Panc1 (cell line): ENCODE measurements at regions of chr4 and their contacts with region 1.

Region 1: DNA sequence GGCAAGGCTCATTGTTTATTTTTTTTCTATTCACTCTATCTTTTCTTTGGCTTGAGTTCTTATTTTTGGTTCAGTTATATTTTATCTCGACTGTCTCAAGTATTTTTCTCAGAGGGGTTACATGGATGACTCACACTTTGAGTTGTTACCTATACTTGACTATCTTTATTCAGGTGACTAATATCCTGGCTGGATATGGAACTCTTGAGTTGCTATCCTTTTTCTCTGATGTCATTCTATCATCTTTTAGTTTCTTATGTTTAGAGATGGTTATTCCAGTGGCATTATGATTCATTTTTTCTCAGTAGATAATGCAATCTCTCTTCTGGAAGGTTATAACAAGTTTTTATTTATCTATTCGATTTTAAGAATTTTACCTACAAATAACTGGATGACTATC is 117.9 kb downstream of the COX18 start:
- DNase-seq: no peak
- ATAC-seq: no peak
- H3K4me3 ChIP-seq: no peak overlapping the region
- H3K27ac ChIP-seq: no peak overlapping the region
- H3K4me1 ChIP-seq: no peaks in the 10 kb centered on the region
- H3K27me3 ChIP-seq: no peaks in the 10 kb centered on the region
- CTCF ChIP-seq: no peak

Region 2: GRCh38 chr4:72641611-72642010 is 310.0 kb before region 1 on chr4:
- CTCF ChIA-PET with region 1: no interaction called
- POLR2A ChIA-PET with region 1: no interaction called
- in situ Hi-C with region 1: no loop called
- intact Hi-C with region 1: no loop called
- DNase-seq: no peak
- ATAC-seq: no peak
- H3K4me3 ChIP-seq: no peak overlapping the region
- H3K27ac ChIP-seq: no peak overlapping the region
- H3K4me1 ChIP-seq: no peaks in the 10 kb centered on the region
- H3K27me3 ChIP-seq: no peaks in the 10 kb centered on the region
- CTCF ChIP-seq: no peak

Region 3: GRCh38 chr4:72919937-72920336 is 31.7 kb before region 1 on chr4:
- CTCF ChIA-PET with region 1: no interaction called
- POLR2A ChIA-PET with region 1: interaction called, 14 read pairs
- in situ Hi-C with region 1: no loop called
- intact Hi-C with region 1: no loop called
- DNase-seq: no peak
- ATAC-seq: no peak
- H3K4me3 ChIP-seq: no peak overlapping the region
- H3K27ac ChIP-seq: no peak overlapping the region
- H3K4me1 ChIP-seq: no peaks in the 10 kb centered on the region
- H3K27me3 ChIP-seq: no peaks in the 10 kb centered on the region
- CTCF ChIP-seq: no peak